Naive thymus-derived CD4-positive, alpha-beta T cell (primary cell): ENCODE measurements at regions of chr16 and their contacts with region 1.

Region 1: DNA sequence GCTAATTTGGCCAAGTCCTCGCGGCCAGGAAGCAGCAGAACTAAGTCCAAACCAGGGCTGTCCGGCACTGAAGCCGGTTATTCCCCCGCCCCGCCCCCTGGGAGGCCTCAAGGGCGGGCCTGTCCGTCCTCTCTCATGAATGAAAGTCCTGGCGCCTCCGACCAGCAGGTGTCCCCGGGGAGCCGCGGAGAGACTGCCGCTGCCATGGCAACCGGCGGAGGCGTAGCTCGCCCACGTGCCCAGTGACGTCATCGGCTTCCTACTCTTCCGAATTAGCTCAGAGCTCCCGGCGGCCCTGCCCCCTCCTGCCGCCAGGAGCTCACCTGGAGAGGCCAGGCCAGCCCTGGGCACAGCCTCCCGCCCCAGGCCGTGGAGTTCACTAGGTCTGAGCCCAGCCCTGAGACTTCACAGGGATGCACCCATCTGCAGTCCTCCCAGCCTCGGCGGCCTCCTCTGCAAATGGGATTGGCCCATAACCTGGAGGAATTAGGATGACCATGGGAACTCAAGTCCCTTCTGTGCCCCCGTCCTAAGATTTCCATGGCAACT is 1.3 kb downstream of the SPATA2L start:
- DNase-seq: peak; percentile 88 to 99 (median 92)
- ATAC-seq: peak; percentile 52
- H3K4me3 ChIP-seq: peak overlapping the region; percentile 41
- H3K4me3 Mint-ChIP-seq: peak overlapping the region; percentile 52 to 84 (median 74)
- H3K27ac ChIP-seq: peak overlapping the region; percentile 73
- H3K27ac Mint-ChIP-seq: peak overlapping the region in 8 of 9 donors; percentile 46 to 89 (median 80)
- H3K4me1 ChIP-seq: peaks cover 27 to 28% of the 10 kb centered on the region in 2 donors
- H3K4me1 Mint-ChIP-seq: peaks cover 0 to 34% (median 17%) of the 10 kb centered on the region in 7 donors
- H3K27me3 ChIP-seq: no peaks in the 10 kb centered on the region
- H3K27me3 Mint-ChIP-seq: no peaks in the 10 kb centered on the region

Region 2: GRCh38 chr16:88803264-88803987 is 896.7 kb before region 1 on chr16 and contains the start of gene CDT1:
- CTCF ChIA-PET with region 1: no interaction called
- POLR2A ChIA-PET with region 1: no interaction called
- intact Hi-C with region 1: loop called in 1 of 2 experiments (anchors 5 kb)
- DNase-seq: peak; percentile 73 to 96 (median 85)
- ATAC-seq: peak; percentile 85
- H3K4me3 ChIP-seq: peak within 1 kb of the TSS; percentile 68
- H3K4me3 Mint-ChIP-seq: peak within 1 kb of the TSS; percentile 82 to 90 (median 87)
- H3K27ac ChIP-seq: peak within 1 kb of the TSS; percentile 76
- H3K27ac Mint-ChIP-seq: peak within 1 kb of the TSS; percentile 77 to 90 (median 85)
- H3K4me1 ChIP-seq: peaks cover 10 to 15% of the 10 kb centered on the region in 2 donors
- H3K4me1 Mint-ChIP-seq: peaks cover 9 to 36% (median 20%) of the 10 kb centered on the region in 7 donors
- H3K27me3 ChIP-seq: no peaks in the 10 kb centered on the region
- H3K27me3 Mint-ChIP-seq: no peaks in the 10 kb centered on the region
- total RNA-seq, gene CDT1: 0.35 to 79.2 (median 1.6) TPM in 4 of 5 experiments, not detected in the other

Region 3: DNA sequence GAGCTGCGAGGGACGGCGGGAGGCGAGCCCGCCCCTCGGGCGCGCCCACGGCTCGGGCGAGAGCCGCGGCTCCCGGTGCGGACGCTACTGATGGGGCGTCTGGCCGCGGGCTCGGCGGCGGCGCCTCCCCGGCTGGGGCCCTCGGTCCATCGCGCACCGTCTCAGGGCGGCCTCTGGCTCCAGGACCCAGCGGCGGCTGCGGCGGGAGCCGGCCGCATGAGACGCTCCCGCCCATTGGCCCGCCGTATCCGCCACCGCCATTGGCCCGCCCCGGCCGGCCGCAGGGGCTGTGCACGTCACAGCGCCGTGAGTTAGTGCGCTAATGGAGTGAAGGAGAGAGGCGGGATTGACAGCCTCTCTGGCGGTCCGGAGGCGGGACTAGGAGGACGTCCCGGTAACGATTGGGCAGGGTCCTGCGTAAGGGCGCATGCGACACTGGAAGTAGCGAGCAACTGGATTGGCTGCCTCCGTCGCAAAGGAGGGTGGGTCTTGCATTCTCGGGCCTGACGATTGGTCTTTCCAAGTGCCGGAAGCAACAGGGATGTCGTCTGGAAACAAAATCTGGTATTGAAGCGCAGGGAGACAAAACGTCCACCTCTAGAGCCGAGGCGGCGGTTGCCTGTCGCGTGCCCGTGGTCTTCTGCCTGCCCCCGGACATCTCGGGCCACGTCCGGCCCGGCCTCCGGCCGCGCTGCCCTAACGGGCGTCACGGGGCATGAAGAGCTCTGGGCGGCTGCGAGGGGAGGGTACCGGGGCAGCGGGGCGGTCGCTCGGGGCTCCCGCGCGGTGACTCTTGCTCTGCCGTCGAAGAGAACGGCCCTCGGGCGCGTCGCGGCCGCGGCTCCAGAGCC is 209.6 kb before region 1 on chr16 and contains the start of gene ANKRD11:
- CTCF ChIA-PET with region 1: no interaction called
- POLR2A ChIA-PET with region 1: no interaction called
- intact Hi-C with region 1: loop called (anchors 2 to 5 kb)
- DNase-seq: peak; percentile 99 to 100 (median 99)
- ATAC-seq: peak; percentile 93
- H3K4me3 ChIP-seq: peak within 1 kb of the TSS; percentile 92
- H3K4me3 Mint-ChIP-seq: peak within 1 kb of the TSS; percentile 89 to 98 (median 94)
- H3K27ac ChIP-seq: peak within 1 kb of the TSS; percentile 90
- H3K27ac Mint-ChIP-seq: peak within 1 kb of the TSS; percentile 92 to 99 (median 97)
- H3K4me1 ChIP-seq: peaks cover 44 to 48% of the 10 kb centered on the region in 2 donors
- H3K4me1 Mint-ChIP-seq: peaks cover 48 to 73% (median 53%) of the 10 kb centered on the region in 7 donors
- H3K27me3 ChIP-seq: no peaks in the 10 kb centered on the region
- H3K27me3 Mint-ChIP-seq: peaks cover 0 to 2% (median 0%) of the 10 kb centered on the region in 5 donors
- total RNA-seq, gene ANKRD11: 178 to 254 (median 240) TPM

Region 4: DNA sequence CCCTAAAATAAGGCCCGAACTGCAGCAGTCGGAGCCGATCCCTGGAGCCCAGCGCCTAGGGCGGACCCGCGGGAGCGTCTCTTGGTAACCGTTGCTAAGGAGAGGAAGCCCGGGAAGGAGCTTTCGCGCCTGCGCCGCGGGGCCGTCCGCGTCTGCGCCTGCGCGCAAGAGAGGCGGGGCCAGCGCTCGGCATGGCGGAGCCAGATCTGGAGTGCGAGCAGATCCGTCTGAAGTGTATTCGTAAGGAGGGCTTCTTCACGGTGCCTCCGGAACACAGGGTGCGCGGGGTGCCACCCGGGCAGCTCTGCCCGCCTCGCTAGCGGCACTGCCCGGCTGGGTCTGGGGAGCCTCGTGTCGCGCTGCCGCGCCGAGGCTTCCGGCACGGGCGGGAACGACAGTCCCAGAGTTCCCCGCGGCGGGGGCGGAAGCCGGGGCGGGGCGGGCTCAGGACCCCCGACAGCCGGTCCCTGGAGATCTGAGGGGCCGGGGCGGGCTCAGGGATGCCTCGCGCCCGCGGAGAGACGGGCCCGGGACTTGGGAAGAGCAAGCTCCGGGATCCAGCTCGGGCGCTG is 13.6 kb before region 1 on chr16 and contains the start of gene CDK10:
- CTCF ChIA-PET with region 1: interaction called, 10 read pairs
- POLR2A ChIA-PET with region 1: interaction called, 21 read pairs
- intact Hi-C with region 1: loop called (anchors 1 kb)
- DNase-seq: peak; percentile 80 to 97 (median 89)
- ATAC-seq: peak; percentile 90
- H3K4me3 ChIP-seq: peak within 1 kb of the TSS; percentile 96
- H3K4me3 Mint-ChIP-seq: peak within 1 kb of the TSS; percentile 86 to 96 (median 92)
- H3K27ac ChIP-seq: peak within 1 kb of the TSS; percentile 93
- H3K27ac Mint-ChIP-seq: peak within 1 kb of the TSS; percentile 80 to 95 (median 92)
- H3K4me1 ChIP-seq: peaks cover 0 to 7% of the 10 kb centered on the region in 2 donors
- H3K4me1 Mint-ChIP-seq: peaks cover 9 to 18% (median 17%) of the 10 kb centered on the region in 7 donors
- H3K27me3 ChIP-seq: no peaks in the 10 kb centered on the region
- H3K27me3 Mint-ChIP-seq: no peaks in the 10 kb centered on the region
- total RNA-seq, gene CDK10: 91.5 to 150 (median 102) TPM

Region 5: GRCh38 chr16:89795676-89796075 is 95.5 kb after region 1 on chr16:
- CTCF ChIA-PET with region 1: interaction called, 138 read pairs
- POLR2A ChIA-PET with region 1: interaction called, 21 read pairs
- intact Hi-C with region 1: loop called in 1 of 2 experiments (anchors 1 kb)
- DNase-seq: no peak
- ATAC-seq: no peak
- H3K4me3 ChIP-seq: no peak overlapping the region
- H3K4me3 Mint-ChIP-seq: no peak overlapping the region
- H3K27ac ChIP-seq: no peak overlapping the region
- H3K27ac Mint-ChIP-seq: no peak overlapping the region
- H3K4me1 ChIP-seq: no peaks in the 10 kb centered on the region
- H3K4me1 Mint-ChIP-seq: peaks cover 3 to 12% (median 10%) of the 10 kb centered on the region in 7 donors
- H3K27me3 ChIP-seq: no peaks in the 10 kb centered on the region
- H3K27me3 Mint-ChIP-seq: no peaks in the 10 kb centered on the region

Region 6: GRCh38 chr16:89860747-89861304 is 160.7 kb after region 1 on chr16:
- CTCF ChIA-PET with region 1: interaction called, 71 read pairs
- POLR2A ChIA-PET with region 1: interaction called, 17 read pairs
- intact Hi-C with region 1: loop called (anchors 1 kb)
- DNase-seq: peak; percentile 61 to 85 (median 70)
- ATAC-seq: peak; percentile 91
- H3K4me3 ChIP-seq: no peak overlapping the region
- H3K4me3 Mint-ChIP-seq: peak overlapping the region in 5 of 10 donors; percentile 1 to 41 (median 26)
- H3K27ac ChIP-seq: no peak overlapping the region
- H3K27ac Mint-ChIP-seq: peak overlapping the region in 8 of 9 donors; percentile 39 to 83 (median 70)
- H3K4me1 ChIP-seq: peaks cover 27 to 32% of the 10 kb centered on the region in 2 donors
- H3K4me1 Mint-ChIP-seq: peaks cover 32 to 42% (median 34%) of the 10 kb centered on the region in 7 donors
- H3K27me3 ChIP-seq: no peaks in the 10 kb centered on the region
- H3K27me3 Mint-ChIP-seq: no peaks in the 10 kb centered on the region

Region 7: GRCh38 chr16:89909777-89910716 is 209.9 kb after region 1 on chr16:
- CTCF ChIA-PET with region 1: interaction called, 11 read pairs
- POLR2A ChIA-PET with region 1: no interaction called
- intact Hi-C with region 1: loop called in 1 of 2 experiments (anchors 1 kb)
- DNase-seq: peak; percentile 50 to 73 (median 66)
- ATAC-seq: peak; percentile 93
- H3K4me3 ChIP-seq: no peak overlapping the region
- H3K4me3 Mint-ChIP-seq: peak overlapping the region in 1 of 10 donors; percentile 2
- H3K27ac ChIP-seq: no peak overlapping the region
- H3K27ac Mint-ChIP-seq: peak overlapping the region in 4 of 9 donors; percentile 11 to 67 (median 44)
- H3K4me1 ChIP-seq: peaks cover 3 to 4% of the 10 kb centered on the region in 2 donors
- H3K4me1 Mint-ChIP-seq: peaks cover 5 to 15% (median 8%) of the 10 kb centered on the region in 7 donors
- H3K27me3 ChIP-seq: no peaks in the 10 kb centered on the region
- H3K27me3 Mint-ChIP-seq: no peaks in the 10 kb centered on the region